ENCODE measurements at regions of chr2 and their contacts with region 1.

Region 1: DNA sequence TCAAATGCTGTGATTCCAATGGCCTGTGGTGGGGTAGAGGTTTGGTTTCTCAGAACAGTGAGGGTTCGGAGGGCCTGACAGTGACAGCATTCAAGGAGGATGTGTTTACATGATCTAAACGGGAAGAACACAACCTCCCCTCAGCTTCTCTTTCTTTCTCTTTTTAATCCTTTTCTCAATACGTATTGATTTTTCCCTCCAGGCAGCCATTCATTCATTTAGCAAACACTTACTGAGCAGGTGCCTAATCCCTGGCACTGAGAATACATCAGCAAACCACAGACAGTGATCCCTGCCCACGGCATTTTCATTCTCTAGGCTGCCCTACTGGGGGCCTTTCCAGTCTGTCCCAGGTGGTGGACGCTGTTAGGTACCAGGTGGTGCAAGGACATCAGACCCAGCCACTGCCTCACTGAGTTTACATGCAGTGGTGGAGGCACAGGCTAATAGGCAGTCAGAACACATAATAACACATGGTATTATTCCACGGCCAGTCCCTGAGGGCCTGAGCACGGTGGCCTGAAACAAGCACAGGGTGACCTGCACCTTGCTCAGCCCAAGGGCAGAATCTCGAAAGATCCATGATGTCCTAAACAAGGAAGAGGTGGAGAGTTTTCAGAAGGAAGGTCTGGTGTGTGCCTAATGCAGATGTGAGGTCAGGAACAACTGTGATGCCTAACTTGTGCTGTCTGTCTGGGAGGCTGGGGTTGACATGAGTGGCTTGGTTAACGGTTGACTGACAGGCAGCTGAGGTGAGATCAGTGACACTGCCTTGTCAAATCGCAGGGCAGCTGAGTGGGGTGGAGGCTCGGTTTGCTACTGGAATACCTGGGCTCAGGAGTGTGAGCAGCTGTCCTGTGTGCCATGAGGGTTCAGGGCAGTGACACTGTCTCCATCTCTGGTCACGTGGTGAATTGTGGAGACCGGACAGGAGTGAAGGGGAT is 785.5 kb upstream of the HS6ST1 start:
- DNase-seq: no peak
- H3K4me3 ChIP-seq: no peak overlapping the region
- H3K27ac ChIP-seq: no peak overlapping the region
- H3K4me1 ChIP-seq: peaks cover 0 to 15% (median 0%) of the 10 kb centered on the region in 3 donors
- H3K27me3 ChIP-seq: no peaks in the 10 kb centered on the region
- CTCF ChIP-seq: no peak
- POLR2A ChIP-seq: no peak

Region 2: GRCh38 chr2:129347486-129348217 is 243.4 kb after region 1 on chr2:
- intact Hi-C with region 1: loop called (anchors 5 kb)
- DNase-seq: no peak
- H3K4me3 ChIP-seq: no peak overlapping the region
- H3K27ac ChIP-seq: no peak overlapping the region
- H3K4me1 ChIP-seq: no peaks in the 10 kb centered on the region
- H3K27me3 ChIP-seq: no peaks in the 10 kb centered on the region
- CTCF ChIP-seq: no peak
- POLR2A ChIP-seq: no peak